Caco-2 (cell line): ENCODE measurements at regions of chr17 and their contacts with region 1.

Region 1: DNA sequence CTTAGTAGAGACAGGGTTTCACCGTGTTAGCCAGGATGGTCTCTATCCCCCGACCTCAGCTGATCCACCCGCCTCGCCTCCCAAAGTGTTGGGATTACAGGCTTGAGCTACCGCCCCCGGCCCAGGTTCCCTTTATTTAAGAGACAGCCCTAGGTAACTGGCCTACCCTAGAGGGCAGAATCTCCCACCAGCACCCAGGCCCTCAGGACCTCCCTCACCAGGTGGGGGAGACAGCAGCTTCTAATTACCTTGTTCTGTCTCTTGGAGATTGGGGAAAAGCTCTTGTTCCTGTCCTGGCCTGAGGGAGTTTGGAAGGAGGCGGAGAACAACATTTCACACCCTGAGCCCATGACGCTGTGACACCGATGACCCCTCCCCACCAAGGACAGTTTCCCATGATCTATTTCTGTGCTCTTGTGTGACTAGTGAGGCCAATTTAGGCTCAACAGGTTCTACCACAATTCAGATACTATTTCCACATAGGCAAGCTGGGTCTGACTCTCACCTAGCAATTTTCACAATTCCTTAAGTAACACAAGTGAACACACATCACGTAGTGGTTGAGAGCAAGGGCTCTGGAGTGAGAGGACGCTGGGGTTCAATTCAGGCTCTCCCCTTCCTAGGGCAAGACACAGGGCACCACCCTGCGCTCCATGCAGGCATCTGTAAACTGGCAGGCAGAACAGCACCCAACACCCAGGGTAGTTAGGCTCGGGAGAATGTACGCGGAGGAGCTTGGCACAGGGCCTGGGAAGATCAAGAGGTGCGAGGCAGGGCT is 20.4 kb downstream of the HDAC5 start:
- DNase-seq: peak; percentile 78 to 79
- H3K4me3 ChIP-seq: no peak overlapping the region
- H3K4me3 Mint-ChIP-seq: peak overlapping the region; percentile 32
- H3K27ac Mint-ChIP-seq: peak overlapping the region; percentile 87
- H3K4me1 ChIP-seq: peaks cover 12% of the 10 kb centered on the region
- H3K4me1 Mint-ChIP-seq: peaks cover 8% of the 10 kb centered on the region
- H3K27me3 ChIP-seq: no peaks in the 10 kb centered on the region
- H3K27me3 Mint-ChIP-seq: no peaks in the 10 kb centered on the region
- CTCF ChIP-seq: peak in 1 of 2 experiments; percentile 37

Region 2: DNA sequence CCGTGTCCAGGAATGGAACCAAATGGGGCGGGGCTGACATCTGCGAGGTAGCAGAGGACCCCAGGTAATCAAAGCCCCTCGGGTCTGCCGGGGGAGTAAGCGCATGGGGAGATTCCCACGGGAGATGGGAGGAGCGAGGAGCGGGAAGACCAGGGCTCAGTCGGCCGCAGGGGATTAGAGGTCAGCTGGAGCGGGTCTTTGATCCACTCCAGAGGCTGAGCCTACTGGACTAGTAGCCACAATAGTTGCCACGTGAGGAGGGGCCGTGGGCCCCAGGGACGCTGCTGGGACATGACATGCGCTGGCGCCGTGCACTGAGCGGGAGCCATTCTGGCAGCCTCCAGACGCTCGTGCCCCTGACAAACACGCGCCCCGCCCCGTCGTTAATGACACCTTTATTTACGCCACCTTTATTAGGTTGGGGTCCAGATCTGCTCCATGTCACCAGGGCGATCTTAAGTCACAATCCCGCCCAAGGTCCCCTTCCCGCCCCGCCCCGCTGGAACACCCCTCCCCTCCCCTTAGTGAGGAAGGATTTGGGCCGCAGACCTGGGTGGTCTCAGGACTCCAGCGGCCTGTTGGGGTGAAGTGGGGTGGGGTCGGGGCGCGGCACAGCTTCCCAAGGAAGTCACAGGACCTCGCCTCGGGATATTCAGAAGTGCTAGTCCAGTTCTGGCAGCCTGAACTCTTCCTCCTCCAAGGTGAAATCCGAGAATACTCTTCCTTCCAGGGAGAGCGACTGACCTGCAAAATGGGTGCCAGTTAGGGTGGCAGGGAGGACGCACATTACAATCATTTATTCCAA is 175.8 kb before region 1 on chr17:
- CTCF ChIA-PET with region 1: no interaction called
- POLR2A ChIA-PET with region 1: no interaction called
- intact Hi-C with region 1: no loop called
- DNase-seq: no peak
- H3K4me3 ChIP-seq: peak overlapping the region; percentile 19
- H3K4me3 Mint-ChIP-seq: peak overlapping the region; percentile 53
- H3K27ac Mint-ChIP-seq: no peak overlapping the region
- H3K4me1 ChIP-seq: 0 out of 2 replicates have a peak, but pooled peaks cover 6% of the 10 kb centered on the region
- H3K4me1 Mint-ChIP-seq: peaks cover 5% of the 10 kb centered on the region
- H3K27me3 ChIP-seq: no peaks in the 10 kb centered on the region
- H3K27me3 Mint-ChIP-seq: no peaks in the 10 kb centered on the region
- CTCF ChIP-seq: no peak

Region 3: GRCh38 chr17:44084131-44084544 is 18.9 kb before region 1 on chr17:
- CTCF ChIA-PET with region 1: interaction called, 10 read pairs
- POLR2A ChIA-PET with region 1: no interaction called
- intact Hi-C with region 1: no loop called
- DNase-seq: peak in 1 of 2 experiments; percentile 49
- H3K4me3 ChIP-seq: no peak overlapping the region
- H3K4me3 Mint-ChIP-seq: no peak overlapping the region
- H3K27ac Mint-ChIP-seq: no peak overlapping the region
- H3K4me1 ChIP-seq: peaks cover 25% of the 10 kb centered on the region
- H3K4me1 Mint-ChIP-seq: peaks cover 14% of the 10 kb centered on the region
- H3K27me3 ChIP-seq: no peaks in the 10 kb centered on the region
- H3K27me3 Mint-ChIP-seq: no peaks in the 10 kb centered on the region
- CTCF ChIP-seq: peak; percentile 27 to 42

Region 4: GRCh38 chr17:44159519-44160210 is 56.6 kb after region 1 on chr17:
- CTCF ChIA-PET with region 1: no interaction called
- POLR2A ChIA-PET with region 1: no interaction called
- intact Hi-C with region 1: no loop called
- DNase-seq: no peak
- H3K4me3 ChIP-seq: no peak overlapping the region
- H3K4me3 Mint-ChIP-seq: no peak overlapping the region
- H3K27ac Mint-ChIP-seq: no peak overlapping the region
- H3K4me1 ChIP-seq: no peaks in the 10 kb centered on the region
- H3K4me1 Mint-ChIP-seq: no peaks in the 10 kb centered on the region
- H3K27me3 ChIP-seq: no peaks in the 10 kb centered on the region
- H3K27me3 Mint-ChIP-seq: no peaks in the 10 kb centered on the region
- CTCF ChIP-seq: no peak

Region 5: GRCh38 chr17:44191941-44192496 is 89.0 kb after region 1 on chr17:
- CTCF ChIA-PET with region 1: no interaction called
- POLR2A ChIA-PET with region 1: no interaction called
- intact Hi-C with region 1: no loop called
- DNase-seq: peak; percentile 68 to 74
- H3K4me3 ChIP-seq: no peak overlapping the region
- H3K4me3 Mint-ChIP-seq: peak overlapping the region; percentile 11
- H3K27ac Mint-ChIP-seq: peak overlapping the region; percentile 85
- H3K4me1 ChIP-seq: peaks cover 24% of the 10 kb centered on the region
- H3K4me1 Mint-ChIP-seq: peaks cover 13% of the 10 kb centered on the region
- H3K27me3 ChIP-seq: no peaks in the 10 kb centered on the region
- H3K27me3 Mint-ChIP-seq: no peaks in the 10 kb centered on the region
- CTCF ChIP-seq: no peak